Naive thymus-derived CD4-positive, alpha-beta T cell (primary cell): ENCODE measurements at regions of chr1 and their contacts with region 1.

Region 1: DNA sequence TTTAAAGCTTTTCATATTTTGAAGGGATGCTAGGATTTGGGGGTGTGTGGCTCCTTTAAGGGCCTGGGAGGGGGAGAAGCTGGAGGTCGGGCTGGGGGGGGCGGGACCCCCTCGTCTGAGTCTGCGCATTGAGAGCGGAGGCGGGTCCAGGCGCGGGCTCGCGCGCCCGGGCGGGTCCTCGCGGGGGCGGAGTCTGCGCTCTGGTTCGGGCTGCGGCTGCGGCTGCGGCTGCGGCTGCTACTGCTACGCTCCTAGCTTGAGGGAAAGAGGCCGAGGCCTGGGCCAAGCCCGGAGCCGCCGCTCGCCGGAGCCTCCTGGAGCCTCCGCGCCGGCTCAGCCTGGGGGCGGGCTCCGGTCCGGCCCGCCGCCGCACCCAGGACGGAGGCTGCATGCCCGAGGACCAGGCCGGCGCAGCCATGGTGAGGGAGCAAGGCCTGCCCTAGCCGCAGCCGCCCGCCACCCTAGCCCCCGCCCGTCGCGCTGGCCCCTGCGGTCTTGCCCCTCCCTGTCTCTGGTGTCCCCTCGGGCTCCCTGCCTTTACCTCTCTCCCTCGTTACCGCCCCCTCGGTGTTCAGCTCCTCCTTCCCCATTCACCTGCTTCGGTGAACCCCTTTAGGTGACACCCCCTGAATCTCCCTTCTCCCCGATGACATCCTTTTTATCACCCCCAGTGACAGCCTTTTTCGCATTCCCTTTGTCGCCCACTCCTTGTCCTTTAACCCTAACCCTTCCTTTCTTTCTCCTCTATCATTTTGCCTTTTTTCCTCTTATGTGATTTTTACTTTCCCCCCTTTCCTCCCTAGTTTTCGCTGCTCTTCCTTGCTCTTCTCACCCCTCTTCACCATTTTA is at the start of gene ZYG11B:
- DNase-seq: peak; percentile 80 to 93 (median 88)
- ATAC-seq: peak; percentile 97
- H3K4me3 ChIP-seq: peak within 1 kb of the TSS; percentile 85
- H3K4me3 Mint-ChIP-seq: peak within 1 kb of the TSS; percentile 88 to 99 (median 97)
- H3K27ac ChIP-seq: peak within 1 kb of the TSS; percentile 89
- H3K27ac Mint-ChIP-seq: peak within 1 kb of the TSS; percentile 72 to 97 (median 90)
- H3K4me1 ChIP-seq: peaks cover 12 to 19% of the 10 kb centered on the region in 2 donors
- H3K4me1 Mint-ChIP-seq: peaks cover 24 to 60% (median 54%) of the 10 kb centered on the region in 7 donors
- H3K27me3 ChIP-seq: no peaks in the 10 kb centered on the region
- H3K27me3 Mint-ChIP-seq: peaks cover 0 to 6% (median 0%) of the 10 kb centered on the region in 5 donors
- total RNA-seq, gene ZYG11B: 14.9 to 26.8 (median 17.9) TPM

Region 2: DNA sequence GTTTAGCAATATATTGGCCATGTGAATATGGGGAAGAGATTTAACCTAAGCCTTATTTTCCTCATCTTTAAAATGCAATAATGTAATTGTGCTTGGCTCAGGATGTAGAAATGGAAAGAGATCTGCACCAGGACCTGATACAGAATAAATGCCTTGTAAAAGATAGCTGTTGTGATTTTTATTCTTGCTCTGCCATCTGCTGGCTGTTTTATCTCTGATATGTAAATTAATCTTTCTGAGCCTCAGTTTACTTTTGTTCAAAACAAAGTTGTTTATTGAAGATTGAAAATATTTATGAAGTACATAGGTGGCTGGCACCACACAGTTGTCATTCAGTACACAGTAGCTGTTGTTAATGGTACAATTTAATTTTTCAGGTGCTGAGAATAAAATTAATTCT is 21.6 kb after region 1 on chr1:
- CTCF ChIA-PET with region 1: interaction called, 3 read pairs
- POLR2A ChIA-PET with region 1: interaction called, 4 read pairs
- intact Hi-C with region 1: loop called in 1 of 2 experiments (anchors 2 kb)
- DNase-seq: no peak
- ATAC-seq: no peak
- H3K4me3 ChIP-seq: no peak overlapping the region
- H3K4me3 Mint-ChIP-seq: no peak overlapping the region
- H3K27ac ChIP-seq: no peak overlapping the region
- H3K27ac Mint-ChIP-seq: no peak overlapping the region
- H3K4me1 ChIP-seq: peaks cover 0 to 3% of the 10 kb centered on the region in 2 donors
- H3K4me1 Mint-ChIP-seq: peaks cover 4 to 57% (median 38%) of the 10 kb centered on the region in 7 donors
- H3K27me3 ChIP-seq: no peaks in the 10 kb centered on the region
- H3K27me3 Mint-ChIP-seq: no peaks in the 10 kb centered on the region

Region 3: GRCh38 chr1:52769346-52770033 is 43.0 kb after region 1 on chr1:
- CTCF ChIA-PET with region 1: no interaction called
- POLR2A ChIA-PET with region 1: no interaction called
- intact Hi-C with region 1: no loop called
- DNase-seq: no peak
- ATAC-seq: no peak
- H3K4me3 ChIP-seq: no peak overlapping the region
- H3K4me3 Mint-ChIP-seq: no peak overlapping the region
- H3K27ac ChIP-seq: no peak overlapping the region
- H3K27ac Mint-ChIP-seq: no peak overlapping the region
- H3K4me1 ChIP-seq: peaks cover 0 to 5% of the 10 kb centered on the region in 2 donors
- H3K4me1 Mint-ChIP-seq: peaks cover 9 to 35% (median 19%) of the 10 kb centered on the region in 7 donors
- H3K27me3 ChIP-seq: no peaks in the 10 kb centered on the region
- H3K27me3 Mint-ChIP-seq: no peaks in the 10 kb centered on the region

Region 4: GRCh38 chr1:52920791-52921291 is 194.4 kb after region 1 on chr1:
- CTCF ChIA-PET with region 1: no interaction called
- POLR2A ChIA-PET with region 1: no interaction called
- intact Hi-C with region 1: loop called (anchors 1 to 5 kb)
- DNase-seq: no peak
- ATAC-seq: no peak
- H3K4me3 ChIP-seq: peak overlapping the region; percentile 67
- H3K4me3 Mint-ChIP-seq: peak overlapping the region; percentile 65 to 89 (median 84)
- H3K27ac ChIP-seq: peak overlapping the region; percentile 74
- H3K27ac Mint-ChIP-seq: peak overlapping the region; percentile 51 to 86 (median 70)
- H3K4me1 ChIP-seq: peaks cover 0 to 12% of the 10 kb centered on the region in 2 donors
- H3K4me1 Mint-ChIP-seq: peaks cover 16 to 41% (median 31%) of the 10 kb centered on the region in 7 donors
- H3K27me3 ChIP-seq: no peaks in the 10 kb centered on the region
- H3K27me3 Mint-ChIP-seq: peaks cover 0 to 4% (median 0%) of the 10 kb centered on the region in 5 donors

Region 5: GRCh38 chr1:52927212-52928014 is 200.9 kb after region 1 on chr1 and contains the start of gene SCP2:
- CTCF ChIA-PET with region 1: no interaction called
- POLR2A ChIA-PET with region 1: no interaction called
- intact Hi-C with region 1: loop called in 1 of 2 experiments (anchors 5 kb)
- DNase-seq: peak; percentile 64 to 83 (median 75)
- ATAC-seq: peak; percentile 96
- H3K4me3 ChIP-seq: peak within 1 kb of the TSS; percentile 87
- H3K4me3 Mint-ChIP-seq: peak within 1 kb of the TSS; percentile 82 to 96 (median 88)
- H3K27ac ChIP-seq: peak within 1 kb of the TSS; percentile 77
- H3K27ac Mint-ChIP-seq: peak within 1 kb of the TSS; percentile 33 to 93 (median 75)
- H3K4me1 ChIP-seq: peaks cover 4 to 7% of the 10 kb centered on the region in 2 donors
- H3K4me1 Mint-ChIP-seq: peaks cover 16 to 41% (median 27%) of the 10 kb centered on the region in 7 donors
- H3K27me3 ChIP-seq: no peaks in the 10 kb centered on the region
- H3K27me3 Mint-ChIP-seq: peaks cover 0 to 6% (median 0%) of the 10 kb centered on the region in 5 donors
- total RNA-seq, gene SCP2: 39.4 to 88.7 (median 48.3) TPM

Region 6: DNA sequence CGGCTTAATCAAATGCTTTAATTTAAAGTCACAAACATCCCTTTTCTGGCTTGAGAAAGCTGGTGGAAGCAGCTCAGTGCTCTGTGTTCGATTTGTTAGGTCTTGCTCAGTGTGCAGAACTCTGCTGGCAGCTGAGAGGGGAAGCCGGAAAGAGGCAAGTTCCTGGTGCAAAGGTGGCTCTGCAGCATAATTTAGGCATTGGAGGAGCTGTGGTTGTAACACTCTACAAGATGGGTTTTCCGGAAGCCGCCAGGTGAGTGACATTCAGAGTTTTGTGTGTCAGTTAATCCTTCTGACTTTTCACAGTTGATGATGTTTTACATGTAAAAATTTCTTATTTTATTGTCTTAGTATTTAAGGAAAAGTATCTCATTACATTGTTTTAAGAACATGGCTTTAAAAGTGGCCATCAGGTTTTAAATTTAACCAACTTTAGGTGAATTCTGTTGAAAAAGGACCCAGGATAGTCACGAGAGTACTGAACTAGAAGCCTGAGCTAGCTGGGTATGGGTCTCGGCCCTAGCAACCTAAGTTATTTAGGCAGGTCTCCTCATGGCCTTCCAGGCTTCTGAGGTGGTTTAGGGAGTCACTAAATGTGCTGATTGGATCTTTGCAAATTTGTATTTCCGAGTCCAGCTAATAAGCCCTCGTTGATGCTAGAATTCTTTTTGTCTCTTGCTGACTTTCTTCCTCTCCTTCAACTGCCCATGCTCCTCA is 288.5 kb after region 1 on chr1:
- CTCF ChIA-PET with region 1: no interaction called
- POLR2A ChIA-PET with region 1: no interaction called
- intact Hi-C with region 1: loop called (anchors 1 kb)
- DNase-seq: peak; percentile 27 to 91 (median 84)
- ATAC-seq: peak; percentile 100
- H3K4me3 ChIP-seq: peak overlapping the region; percentile 65
- H3K4me3 Mint-ChIP-seq: peak overlapping the region; percentile 81 to 96 (median 90)
- H3K27ac ChIP-seq: peak overlapping the region; percentile 57
- H3K27ac Mint-ChIP-seq: peak overlapping the region; percentile 57 to 92 (median 84)
- H3K4me1 ChIP-seq: peaks cover 14 to 16% of the 10 kb centered on the region in 2 donors
- H3K4me1 Mint-ChIP-seq: peaks cover 20 to 48% (median 40%) of the 10 kb centered on the region in 7 donors
- H3K27me3 ChIP-seq: no peaks in the 10 kb centered on the region
- H3K27me3 Mint-ChIP-seq: no peaks in the 10 kb centered on the region